CD8-positive, alpha-beta T cell (primary cell): ENCODE measurements at regions of chr6 and their contacts with region 1.

Region 1: DNA sequence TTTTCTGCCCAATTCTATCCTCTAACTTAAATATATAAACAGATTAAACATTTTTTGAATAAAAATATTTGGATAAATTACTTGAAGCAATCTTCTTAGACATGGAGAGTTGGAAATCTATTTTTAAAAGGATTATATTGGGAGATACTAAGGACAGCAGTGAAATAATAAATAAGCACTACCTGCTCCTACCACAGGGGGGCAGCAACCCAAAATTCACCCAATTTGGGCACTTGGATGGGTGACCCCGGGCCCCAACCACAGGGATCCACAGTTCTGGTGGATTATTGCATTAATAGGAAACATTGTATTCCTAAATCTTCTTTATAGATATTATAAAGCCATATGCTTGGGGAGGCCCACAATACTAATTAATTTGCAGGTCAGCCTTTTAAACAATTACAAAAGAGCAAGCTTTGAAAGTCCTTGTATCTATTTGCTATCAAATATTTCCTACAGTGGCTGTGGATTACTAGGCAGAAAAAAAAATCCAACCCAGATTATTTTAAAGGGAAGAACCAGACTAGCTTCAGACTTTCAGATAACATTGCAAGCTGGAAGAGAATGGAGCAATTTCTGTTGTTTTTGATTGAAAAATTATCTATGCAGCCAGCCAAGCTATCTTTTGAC is 66.4 kb upstream of the PDE10A start:
- DNase-seq: peak in 2 of 9 experiments; percentile 5 to 32
- ATAC-seq: no peak
- H3K4me3 ChIP-seq: no peak overlapping the region
- H3K4me3 Mint-ChIP-seq: no peak overlapping the region
- H3K27ac ChIP-seq: no peak overlapping the region
- H3K27ac Mint-ChIP-seq: no peak overlapping the region
- H3K4me1 ChIP-seq: no peaks in the 10 kb centered on the region
- H3K4me1 Mint-ChIP-seq: no peaks in the 10 kb centered on the region
- H3K27me3 ChIP-seq: no peaks in the 10 kb centered on the region
- H3K27me3 Mint-ChIP-seq: peaks cover 13% of the 10 kb centered on the region
- CTCF ChIP-seq: peak; percentile 55

Region 2: DNA sequence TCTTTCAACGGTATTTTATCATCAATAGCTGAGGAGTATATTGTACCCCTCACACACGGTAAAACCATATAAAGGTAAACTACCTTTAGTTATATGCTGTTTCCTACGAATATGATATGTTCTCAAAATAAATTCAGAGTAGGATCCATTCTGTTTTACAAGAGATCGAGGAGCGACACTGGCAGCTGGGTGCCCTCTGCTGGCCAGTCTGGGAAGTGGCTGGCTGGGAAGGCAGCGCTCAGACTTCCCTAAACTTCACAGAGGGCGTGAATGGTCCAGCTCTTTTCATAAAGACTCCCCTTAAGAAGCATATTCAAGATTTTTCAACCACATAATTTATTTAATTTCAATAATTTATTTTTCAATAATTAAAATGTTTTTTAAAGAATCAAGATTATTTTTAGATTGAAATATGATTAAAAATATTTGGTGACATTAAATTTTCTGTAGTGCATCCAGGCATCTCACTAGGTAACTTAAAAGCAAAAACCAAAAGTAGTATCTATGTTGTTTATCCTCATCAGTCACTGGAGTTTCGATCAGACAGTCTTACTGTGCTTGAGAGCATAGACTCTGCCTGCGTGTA is 121.1 kb after region 1 on chr6:
- CTCF ChIA-PET with region 1: interaction called, 3 read pairs
- POLR2A ChIA-PET with region 1: no interaction called
- intact Hi-C with region 1: loop called in 1 of 2 experiments (anchors 5 kb)
- DNase-seq: peak; percentile 15 to 67 (median 48)
- ATAC-seq: peak; percentile 63
- H3K4me3 ChIP-seq: no peak overlapping the region
- H3K4me3 Mint-ChIP-seq: no peak overlapping the region
- H3K27ac ChIP-seq: no peak overlapping the region
- H3K27ac Mint-ChIP-seq: no peak overlapping the region
- H3K4me1 ChIP-seq: peaks cover 6% of the 10 kb centered on the region
- H3K4me1 Mint-ChIP-seq: peaks cover 11% of the 10 kb centered on the region
- H3K27me3 ChIP-seq: peaks cover 4 to 16% of the 10 kb centered on the region in 2 experiments
- H3K27me3 Mint-ChIP-seq: peaks cover 55% of the 10 kb centered on the region
- CTCF ChIP-seq: peak; percentile 97

Region 3: GRCh38 chr6:166106076-166106686 is 376.8 kb after region 1 on chr6:
- CTCF ChIA-PET with region 1: no interaction called
- POLR2A ChIA-PET with region 1: no interaction called
- intact Hi-C with region 1: loop called in 1 of 2 experiments (anchors 5 kb)
- DNase-seq: peak; percentile 25 to 67 (median 55)
- ATAC-seq: peak; percentile 71
- H3K4me3 ChIP-seq: no peak overlapping the region
- H3K4me3 Mint-ChIP-seq: no peak overlapping the region
- H3K27ac ChIP-seq: no peak overlapping the region
- H3K27ac Mint-ChIP-seq: no peak overlapping the region
- H3K4me1 ChIP-seq: no peaks in the 10 kb centered on the region
- H3K4me1 Mint-ChIP-seq: peaks cover 7% of the 10 kb centered on the region
- H3K27me3 ChIP-seq: no peaks in the 10 kb centered on the region
- H3K27me3 Mint-ChIP-seq: peaks cover 14% of the 10 kb centered on the region
- CTCF ChIP-seq: peak; percentile 76